ENCODE measurements at regions of chr4 and their contacts with region 1.

Region 1: GRCh38 chr4:184538023-184538599 is 63.8 kb upstream of the IRF2 start:
- DNase-seq: peak; percentile 94
- H3K4me3 ChIP-seq: peak overlapping the region; percentile 77 to 80
- H3K27ac ChIP-seq: peak overlapping the region; percentile 93 to 98
- H3K4me1 ChIP-seq: peaks cover 27% of the 10 kb centered on the region
- H3K27me3 ChIP-seq: no peaks in the 10 kb centered on the region
- CTCF ChIP-seq: peak; percentile 36 to 87 (median 85)
- POLR2A ChIP-seq: no peak

Region 2: DNA sequence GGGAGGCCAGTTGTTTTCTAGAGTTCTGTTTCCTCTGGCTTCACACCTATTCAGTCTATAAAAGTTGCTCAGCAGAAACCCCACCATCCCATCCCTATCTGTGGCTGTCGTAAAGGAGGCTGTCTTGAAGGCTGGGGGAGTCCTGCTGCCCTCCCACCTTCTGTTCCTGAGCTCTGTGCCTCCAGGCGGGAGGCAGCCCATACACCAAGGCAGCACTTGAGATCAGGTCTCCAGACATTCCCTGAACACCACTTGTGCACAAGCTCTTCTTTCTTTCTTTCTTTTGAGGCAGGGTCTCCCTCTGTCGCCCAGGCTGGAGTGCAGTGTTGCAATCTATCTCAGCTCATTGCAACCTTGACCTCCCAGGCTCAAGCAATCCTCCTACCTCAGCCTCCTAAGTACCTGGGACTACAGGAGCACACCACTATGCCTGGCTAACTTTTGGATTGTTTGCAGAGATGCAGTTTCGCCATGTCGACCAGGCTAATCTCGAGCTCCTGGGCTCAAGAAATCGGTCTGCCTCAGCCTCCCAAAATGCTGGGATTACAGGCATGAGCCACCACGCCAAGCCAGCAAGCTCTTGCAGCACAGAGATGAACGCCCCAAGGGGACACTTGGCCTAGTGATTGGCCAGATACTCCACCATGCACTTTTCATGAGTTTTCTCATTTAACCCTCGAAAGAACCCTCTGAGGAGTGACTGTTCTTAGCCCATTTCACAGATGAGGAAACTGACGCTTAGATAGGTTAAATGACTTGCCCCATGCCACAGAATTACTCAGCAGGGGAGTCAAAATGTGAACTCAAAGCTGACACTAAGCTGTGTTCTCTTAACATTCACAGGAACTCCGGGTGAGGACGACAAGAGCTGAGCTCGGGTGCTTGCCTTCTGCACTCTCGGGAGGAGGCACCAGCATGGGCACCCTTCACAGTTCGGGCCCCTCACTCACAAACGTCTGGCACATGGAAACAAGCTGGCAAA is 264.7 kb before region 1 on chr4:
- intact Hi-C with region 1: loop called (anchors 5 kb)
- DNase-seq: no peak
- H3K4me3 ChIP-seq: no peak overlapping the region
- H3K27ac ChIP-seq: peak overlapping the region in 1 of 2 donors; percentile 50
- H3K4me1 ChIP-seq: peaks cover 16% of the 10 kb centered on the region
- H3K27me3 ChIP-seq: no peaks in the 10 kb centered on the region
- CTCF ChIP-seq: no peak
- POLR2A ChIP-seq: no peak

Region 3: GRCh38 chr4:184384810-184385557 is 153.1 kb before region 1 on chr4:
- intact Hi-C with region 1: no loop called
- DNase-seq: no peak
- H3K4me3 ChIP-seq: no peak overlapping the region
- H3K27ac ChIP-seq: peak overlapping the region in 1 of 2 donors; percentile 56
- H3K4me1 ChIP-seq: peaks cover 22% of the 10 kb centered on the region
- H3K27me3 ChIP-seq: no peaks in the 10 kb centered on the region
- CTCF ChIP-seq: no peak
- POLR2A ChIP-seq: no peak

Region 4: GRCh38 chr4:184417802-184418511 is 120.2 kb before region 1 on chr4:
- intact Hi-C with region 1: no loop called
- DNase-seq: no peak
- H3K4me3 ChIP-seq: no peak overlapping the region
- H3K27ac ChIP-seq: peak overlapping the region in 1 of 2 donors; percentile 65
- H3K4me1 ChIP-seq: peaks cover 10% of the 10 kb centered on the region
- H3K27me3 ChIP-seq: no peaks in the 10 kb centered on the region
- CTCF ChIP-seq: no peak
- POLR2A ChIP-seq: no peak

Region 5: DNA sequence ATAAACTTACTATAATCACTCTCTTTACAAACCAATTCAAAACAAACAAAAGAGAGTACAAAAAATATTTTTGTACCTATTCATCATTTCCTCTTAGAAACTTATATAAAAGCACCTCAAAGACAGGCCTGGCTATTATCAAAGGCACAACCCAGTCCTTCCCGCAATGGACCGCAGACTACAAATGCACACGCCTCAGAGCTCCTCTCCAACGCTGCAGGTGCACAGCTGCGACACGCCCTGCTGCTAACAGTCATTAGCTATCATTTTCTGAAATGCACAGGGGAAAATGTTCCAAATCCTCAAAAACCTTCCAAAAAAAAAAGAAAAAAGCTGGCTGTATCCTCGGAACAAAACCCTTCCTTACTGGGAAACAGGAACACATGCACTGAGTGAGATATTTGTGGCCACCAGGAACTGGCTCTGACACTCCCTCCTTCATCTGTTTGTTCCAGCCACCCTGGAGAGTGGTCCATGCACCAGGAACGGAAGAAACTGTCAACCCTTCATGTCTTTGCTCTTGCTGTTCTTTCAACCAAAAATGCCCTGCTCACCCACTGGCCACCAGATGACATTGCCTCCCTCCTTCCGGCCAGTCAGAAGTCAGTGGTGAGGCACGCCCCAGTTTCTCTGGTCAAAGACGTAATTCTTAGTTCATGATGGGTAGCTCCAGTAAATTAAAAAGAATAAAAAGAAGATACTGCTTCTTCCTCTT is 80.4 kb before region 1 on chr4:
- intact Hi-C with region 1: no loop called
- DNase-seq: no peak
- H3K4me3 ChIP-seq: no peak overlapping the region
- H3K27ac ChIP-seq: no peak overlapping the region
- H3K4me1 ChIP-seq: peaks cover 18% of the 10 kb centered on the region
- H3K27me3 ChIP-seq: no peaks in the 10 kb centered on the region
- CTCF ChIP-seq: no peak
- POLR2A ChIP-seq: no peak